CD4-positive, alpha-beta T cell (primary cell): ENCODE measurements at regions of chr3 and their contacts with region 1.

Region 1: GRCh38 chr3:179309225-179310078 is 13.4 kb upstream of the ZNF639 start:
- DNase-seq: no peak
- ATAC-seq: no peak
- H3K4me3 ChIP-seq: no peak overlapping the region
- H3K4me3 Mint-ChIP-seq: no peak overlapping the region
- H3K27ac ChIP-seq: no peak overlapping the region
- H3K27ac Mint-ChIP-seq: no peak overlapping the region
- H3K4me1 ChIP-seq: no peaks in the 10 kb centered on the region
- H3K4me1 Mint-ChIP-seq: no peaks in the 10 kb centered on the region
- H3K27me3 ChIP-seq: no peaks in the 10 kb centered on the region
- H3K27me3 Mint-ChIP-seq: no peaks in the 10 kb centered on the region
- CTCF ChIP-seq: no peak

Region 2: GRCh38 chr3:179108086-179108485 is 201.4 kb before region 1 on chr3:
- CTCF ChIA-PET with region 1: no interaction called
- POLR2A ChIA-PET with region 1: no interaction called
- intact Hi-C with region 1: loop called in 1 of 2 experiments (anchors 2 kb)
- DNase-seq: no peak
- ATAC-seq: no peak
- H3K4me3 ChIP-seq: no peak overlapping the region
- H3K4me3 Mint-ChIP-seq: no peak overlapping the region
- H3K27ac ChIP-seq: no peak overlapping the region
- H3K27ac Mint-ChIP-seq: no peak overlapping the region
- H3K4me1 ChIP-seq: no peaks in the 10 kb centered on the region
- H3K4me1 Mint-ChIP-seq: no peaks in the 10 kb centered on the region
- H3K27me3 ChIP-seq: no peaks in the 10 kb centered on the region
- H3K27me3 Mint-ChIP-seq: peaks cover 13% of the 10 kb centered on the region
- CTCF ChIP-seq: no peak

Region 3: DNA sequence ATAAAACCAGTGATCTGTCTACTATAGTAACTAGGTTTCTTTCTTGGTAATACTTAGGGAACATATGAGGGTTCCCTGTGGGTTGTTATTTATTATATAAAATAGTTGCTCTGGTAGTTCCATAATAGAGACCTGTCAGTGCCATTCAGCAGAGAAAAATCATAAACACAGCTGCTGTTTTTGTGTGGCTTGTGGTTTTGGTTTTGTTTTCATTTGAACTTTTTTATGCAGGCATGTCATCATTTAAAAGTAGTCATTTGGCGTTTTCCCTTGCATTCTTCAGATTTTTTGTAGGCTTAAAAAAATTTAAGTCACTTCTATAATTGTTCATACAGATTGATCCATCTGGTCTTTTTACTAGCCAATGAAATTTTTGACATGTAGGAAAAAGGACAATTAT is 113.4 kb before region 1 on chr3:
- CTCF ChIA-PET with region 1: no interaction called
- POLR2A ChIA-PET with region 1: no interaction called
- intact Hi-C with region 1: loop called in 1 of 2 experiments (anchors 5 kb)
- DNase-seq: peak in 4 of 14 experiments; percentile 9 to 72 (median 66)
- ATAC-seq: peak; percentile 85
- H3K4me3 ChIP-seq: no peak overlapping the region
- H3K4me3 Mint-ChIP-seq: peak overlapping the region; percentile 54
- H3K27ac ChIP-seq: no peak overlapping the region
- H3K27ac Mint-ChIP-seq: peak overlapping the region; percentile 81
- H3K4me1 ChIP-seq: peaks cover 13% of the 10 kb centered on the region
- H3K4me1 Mint-ChIP-seq: peaks cover 65% of the 10 kb centered on the region
- H3K27me3 ChIP-seq: no peaks in the 10 kb centered on the region
- H3K27me3 Mint-ChIP-seq: no peaks in the 10 kb centered on the region
- CTCF ChIP-seq: no peak

Region 4: GRCh38 chr3:179236669-179237301 is 72.7 kb before region 1 on chr3:
- CTCF ChIA-PET with region 1: interaction called, 3 read pairs
- POLR2A ChIA-PET with region 1: no interaction called
- intact Hi-C with region 1: loop called in 1 of 2 experiments (anchors 10 kb)
- DNase-seq: no peak
- ATAC-seq: no peak
- H3K4me3 ChIP-seq: no peak overlapping the region
- H3K4me3 Mint-ChIP-seq: no peak overlapping the region
- H3K27ac ChIP-seq: no peak overlapping the region
- H3K27ac Mint-ChIP-seq: no peak overlapping the region
- H3K4me1 ChIP-seq: no peaks in the 10 kb centered on the region
- H3K4me1 Mint-ChIP-seq: peaks cover 12% of the 10 kb centered on the region
- H3K27me3 ChIP-seq: no peaks in the 10 kb centered on the region
- H3K27me3 Mint-ChIP-seq: no peaks in the 10 kb centered on the region
- CTCF ChIP-seq: no peak

Region 5: GRCh38 chr3:179272385-179272784 is 37.1 kb before region 1 on chr3:
- CTCF ChIA-PET with region 1: no interaction called
- POLR2A ChIA-PET with region 1: no interaction called
- intact Hi-C with region 1: no loop called
- DNase-seq: peak in 3 of 14 experiments; percentile 13 to 40 (median 14)
- ATAC-seq: no peak
- H3K4me3 ChIP-seq: no peak overlapping the region
- H3K4me3 Mint-ChIP-seq: no peak overlapping the region
- H3K27ac ChIP-seq: no peak overlapping the region
- H3K27ac Mint-ChIP-seq: no peak overlapping the region
- H3K4me1 ChIP-seq: no peaks in the 10 kb centered on the region
- H3K4me1 Mint-ChIP-seq: no peaks in the 10 kb centered on the region
- H3K27me3 ChIP-seq: peaks cover 0 to 5% of the 10 kb centered on the region in 2 experiments
- H3K27me3 Mint-ChIP-seq: peaks cover 25% of the 10 kb centered on the region
- CTCF ChIP-seq: peak; percentile 31